ENCODE measurements at regions of chr6 and their contacts with region 1.

Region 1: GRCh38 chr6:99119109-99120031 is 171.6 kb upstream of the FBXL4 start:
- DNase-seq: no peak
- ATAC-seq: peak; percentile 62; the same call in 2 of the 3 replicates
- H3K4me3 ChIP-seq: no peak overlapping the region
- H3K27ac ChIP-seq: no peak overlapping the region
- H3K4me1 ChIP-seq: no peaks in the 10 kb centered on the region
- H3K27me3 ChIP-seq: no peaks in the 10 kb centered on the region; a peak in 1 of 4 replicates
- CTCF ChIP-seq: peak; percentile 52 to 68 (median 57); a peak in 5 of 6 replicates
- EP300 ChIP-seq: no peak
- POLR2A ChIP-seq: no peak
- RAD21 ChIP-seq: peak; percentile 86

Region 2: GRCh38 chr6:97497713-97498331 is 1621.5 kb before region 1 on chr6:
- CTCF ChIA-PET with region 1: interaction called, 8 read pairs
- POLR2A ChIA-PET with region 1: no interaction called
- RAD21 ChIA-PET with region 1: interaction called, 4 read pairs
- SMC1A ChIA-PET with region 1: interaction called, 9 read pairs
- in situ Hi-C with region 1: loop called (anchors 25 kb)
- intact Hi-C with region 1: loop called (anchors 1 kb)
- DNase-seq: peak; percentile 12
- ATAC-seq: peak; percentile 100
- H3K4me3 ChIP-seq: no peak overlapping the region
- H3K27ac ChIP-seq: no peak overlapping the region
- H3K4me1 ChIP-seq: no peaks in the 10 kb centered on the region
- H3K27me3 ChIP-seq: no peaks in the 10 kb centered on the region
- CTCF ChIP-seq: peak; percentile 80 to 85 (median 84)
- EP300 ChIP-seq: no peak
- POLR2A ChIP-seq: no peak
- RAD21 ChIP-seq: peak; percentile 78

Region 3: DNA sequence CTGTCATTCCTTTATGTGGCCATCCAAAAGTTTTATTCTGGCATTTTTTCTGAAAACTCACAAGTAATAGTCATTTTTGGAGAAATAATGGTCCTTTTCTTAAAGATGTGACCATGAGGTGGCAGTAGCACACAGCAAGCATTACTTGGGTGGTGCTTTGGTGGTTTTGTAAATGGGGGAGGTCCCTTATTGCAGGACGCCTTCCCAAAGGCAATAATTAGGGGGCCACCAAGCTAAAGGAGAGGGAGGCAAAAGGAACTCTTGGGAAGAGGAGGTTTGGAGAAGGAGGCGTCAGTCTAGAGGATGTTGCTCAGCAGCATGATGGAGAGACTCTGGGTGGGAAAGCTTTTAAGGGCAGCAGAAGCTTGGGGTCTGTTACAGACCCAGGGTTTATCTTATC is 1413.8 kb before region 1 on chr6:
- CTCF ChIA-PET with region 1: interaction called, 3 read pairs
- POLR2A ChIA-PET with region 1: no interaction called
- RAD21 ChIA-PET with region 1: no interaction called
- SMC1A ChIA-PET with region 1: no interaction called
- in situ Hi-C with region 1: no loop called
- intact Hi-C with region 1: loop called (anchors 10 kb)
- DNase-seq: no peak
- ATAC-seq: no peak
- H3K4me3 ChIP-seq: no peak overlapping the region
- H3K27ac ChIP-seq: no peak overlapping the region
- H3K4me1 ChIP-seq: no peaks in the 10 kb centered on the region
- H3K27me3 ChIP-seq: no peaks in the 10 kb centered on the region
- CTCF ChIP-seq: peak; percentile 6 to 39 (median 37); a peak in 3 of 6 replicates
- EP300 ChIP-seq: no peak
- POLR2A ChIP-seq: no peak
- RAD21 ChIP-seq: peak; percentile 52

Region 4: GRCh38 chr6:98769544-98769943 is 349.8 kb before region 1 on chr6:
- CTCF ChIA-PET with region 1: interaction called, 7 read pairs
- POLR2A ChIA-PET with region 1: no interaction called
- RAD21 ChIA-PET with region 1: no interaction called
- SMC1A ChIA-PET with region 1: interaction called, 3 read pairs
- in situ Hi-C with region 1: no loop called
- intact Hi-C with region 1: loop called (anchors 5 kb)
- DNase-seq: no peak
- ATAC-seq: peak; percentile 61
- H3K4me3 ChIP-seq: no peak overlapping the region
- H3K27ac ChIP-seq: no peak overlapping the region
- H3K4me1 ChIP-seq: no peaks in the 10 kb centered on the region
- H3K27me3 ChIP-seq: no peaks in the 10 kb centered on the region
- CTCF ChIP-seq: peak; percentile 14 to 25 (median 25); a peak in 2 of 6 replicates
- EP300 ChIP-seq: no peak
- POLR2A ChIP-seq: no peak
- RAD21 ChIP-seq: peak; percentile 41; the same call in 1 of the 2 replicates